A549 (cell line): ENCODE measurements at regions of chrX and their contacts with region 1.

Region 1: GRCh38 chrX:149539283-149540130 is 1.3 kb upstream of the EOLA1 start:
- DNase-seq: peak; percentile 72 to 93
- ATAC-seq: peak; percentile 77 to 81
- H3K4me3 ChIP-seq: peak overlapping the region; percentile 94
- H3K27ac ChIP-seq: peak overlapping the region; percentile 78 to 91
- H3K4me1 ChIP-seq: 0 out of 3 replicates have a peak, but pooled peaks cover 6% of the 10 kb centered on the region
- CTCF ChIP-seq: no peak
- EP300 ChIP-seq: no peak
- POLR2A ChIP-seq: no peak
- RAD21 ChIP-seq: no peak

Region 2: GRCh38 chrX:149504915-149505651 is 34.4 kb before region 1 on chrX and contains the start of gene IDS:
- CTCF ChIA-PET with region 1: interaction called, 9 read pairs
- POLR2A ChIA-PET with region 1: interaction called, 24 read pairs
- DNase-seq: peak; percentile 80 to 88
- ATAC-seq: peak; percentile 88 to 92
- H3K4me3 ChIP-seq: peak within 1 kb of the TSS; percentile 65
- H3K27ac ChIP-seq: peak within 1 kb of the TSS; percentile 83 to 98
- H3K4me1 ChIP-seq: peaks cover 16% of the 10 kb centered on the region; the same call in 2 of the 3 replicates
- CTCF ChIP-seq: no peak
- EP300 ChIP-seq: no peak
- POLR2A ChIP-seq: peak; percentile 75
- RAD21 ChIP-seq: no peak
- polyA plus RNA-seq, gene IDS: 120 and 135 TPM in 2 replicates

Region 3: GRCh38 chrX:149938427-149939270 is 399.1 kb after region 1 on chrX and contains the start of gene EOLA2:
- CTCF ChIA-PET with region 1: no interaction called
- POLR2A ChIA-PET with region 1: interaction called, 35 read pairs
- DNase-seq: peak; percentile 67 to 99
- ATAC-seq: peak; percentile 78 to 80
- H3K4me3 ChIP-seq: peak within 1 kb of the TSS; percentile 81
- H3K27ac ChIP-seq: peak within 1 kb of the TSS; percentile 97 to 98
- H3K4me1 ChIP-seq: peaks cover 4% of the 10 kb centered on the region; the same call in 1 of the 3 replicates
- CTCF ChIP-seq: peak; percentile 31; the same call in 2 of the 3 replicates
- EP300 ChIP-seq: no peak
- POLR2A ChIP-seq: peak; percentile 38
- RAD21 ChIP-seq: no peak
- polyA plus RNA-seq, gene EOLA2: 60.9 and 61.7 TPM in 2 replicates